ENCODE measurements at regions of chr12 and their contacts with region 1.

Region 1: DNA sequence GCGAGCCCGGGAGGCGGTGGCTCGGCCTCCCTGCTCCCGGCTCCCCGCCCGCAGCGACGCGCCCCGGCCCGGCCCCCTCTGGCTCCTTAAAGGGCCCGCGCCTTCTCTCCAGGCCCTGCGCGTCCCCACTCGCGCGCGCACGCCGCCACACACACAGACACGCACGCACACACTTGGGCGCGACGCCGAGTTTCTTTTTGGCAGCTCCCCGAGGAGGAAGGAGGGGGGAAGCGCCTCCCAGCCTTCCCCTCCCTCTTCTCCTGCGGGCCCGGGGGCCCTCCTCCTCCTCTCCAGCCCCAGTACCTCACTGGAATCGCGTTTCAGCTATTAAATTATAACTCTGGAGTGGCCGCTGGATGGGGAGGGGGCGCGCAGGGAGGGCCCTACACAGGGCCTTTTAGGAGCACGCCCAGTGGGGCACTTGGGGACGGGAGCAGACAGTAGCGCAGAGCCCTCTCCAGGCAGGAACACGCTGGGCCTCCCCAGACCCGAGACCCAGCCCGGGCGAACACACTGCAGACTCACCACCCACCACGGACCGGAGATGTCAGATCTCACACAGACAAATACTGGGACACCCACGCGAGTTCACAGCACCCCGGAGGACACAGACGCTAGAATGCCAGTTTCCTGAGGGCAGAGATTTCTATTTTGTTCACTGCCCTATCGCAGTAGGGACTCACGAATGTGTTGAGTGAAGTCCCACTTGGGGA is 405 bp upstream of the NCOR2 start:
- DNase-seq: peak; percentile 98
- H3K4me3 ChIP-seq: peak overlapping the region; percentile 4 to 96 (median 56)
- H3K27ac ChIP-seq: peak overlapping the region; percentile 91 to 100 (median 98)
- H3K4me1 ChIP-seq: peaks cover 0 to 56% (median 53%) of the 10 kb centered on the region in 4 donors
- H3K27me3 ChIP-seq: no peaks in the 10 kb centered on the region
- CTCF ChIP-seq: no peak
- EP300 ChIP-seq: peak in 2 of 4 donors; percentile 56 to 69
- POLR2A ChIP-seq: no peak

Region 2: DNA sequence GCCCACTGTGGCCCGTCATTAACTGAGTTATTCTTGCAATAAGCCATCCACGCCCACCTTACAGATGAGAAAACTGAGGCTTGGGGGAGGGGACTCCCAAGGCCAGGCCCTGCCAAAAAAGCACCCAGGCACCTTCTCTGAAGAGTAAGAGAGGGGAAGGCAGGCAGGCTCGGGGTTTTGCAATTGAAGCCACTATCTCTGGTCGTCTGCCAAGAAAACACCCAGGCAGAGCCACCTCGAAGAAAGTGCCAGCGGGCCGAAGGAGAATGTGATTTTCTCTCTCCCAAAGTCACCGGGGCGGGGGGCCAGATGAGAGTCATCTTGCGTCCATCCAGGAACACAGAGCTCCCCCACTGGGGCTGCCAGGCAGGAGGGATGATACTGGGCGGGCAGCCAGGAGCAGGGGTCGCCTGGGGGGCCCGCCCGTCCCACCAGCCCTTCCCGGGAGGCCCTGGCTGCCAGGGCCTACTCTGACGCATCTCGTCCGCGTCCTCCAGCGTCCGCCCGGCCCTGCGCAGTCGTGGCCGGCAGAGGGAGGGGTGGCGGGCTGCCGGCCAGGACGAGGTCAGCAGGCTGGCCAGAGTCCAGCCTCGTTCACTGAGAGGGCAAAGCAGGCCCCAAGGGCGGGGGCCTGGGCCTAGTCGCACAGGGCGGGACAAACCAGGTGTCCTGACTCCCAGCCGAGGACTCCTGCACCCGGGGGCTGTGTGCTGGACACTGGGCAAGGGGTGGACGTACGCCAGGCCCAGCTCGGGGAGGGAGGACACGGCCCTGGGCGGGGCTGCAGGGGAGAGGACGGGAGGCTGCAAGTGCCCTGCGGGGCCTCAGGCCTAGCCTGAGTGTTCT is 198.5 kb before region 1 on chr12:
- intact Hi-C with region 1: loop called (anchors 5 kb)
- DNase-seq: peak; percentile 97
- H3K4me3 ChIP-seq: peak overlapping the region in 2 of 4 donors; percentile 2 to 12
- H3K27ac ChIP-seq: peak overlapping the region; percentile 88 to 97 (median 92)
- H3K4me1 ChIP-seq: peaks cover 0 to 65% (median 63%) of the 10 kb centered on the region in 4 donors
- H3K27me3 ChIP-seq: no peaks in the 10 kb centered on the region
- CTCF ChIP-seq: peak; percentile 53 to 56 (median 53)
- EP300 ChIP-seq: peak in 3 of 4 donors; percentile 47 to 78 (median 52)
- POLR2A ChIP-seq: peak in 1 of 2 donors; percentile 12

Region 3: GRCh38 chr12:124379938-124380754 is 187.7 kb before region 1 on chr12:
- intact Hi-C with region 1: loop called (anchors 5 kb)
- DNase-seq: peak; percentile 94
- H3K4me3 ChIP-seq: no peak overlapping the region
- H3K27ac ChIP-seq: peak overlapping the region; percentile 94 to 99 (median 96)
- H3K4me1 ChIP-seq: peaks cover 0 to 64% (median 53%) of the 10 kb centered on the region in 4 donors
- H3K27me3 ChIP-seq: no peaks in the 10 kb centered on the region
- CTCF ChIP-seq: peak; percentile 65 to 71 (median 68)
- EP300 ChIP-seq: peak in 2 of 4 donors; percentile 1 to 21
- POLR2A ChIP-seq: no peak

Region 4: DNA sequence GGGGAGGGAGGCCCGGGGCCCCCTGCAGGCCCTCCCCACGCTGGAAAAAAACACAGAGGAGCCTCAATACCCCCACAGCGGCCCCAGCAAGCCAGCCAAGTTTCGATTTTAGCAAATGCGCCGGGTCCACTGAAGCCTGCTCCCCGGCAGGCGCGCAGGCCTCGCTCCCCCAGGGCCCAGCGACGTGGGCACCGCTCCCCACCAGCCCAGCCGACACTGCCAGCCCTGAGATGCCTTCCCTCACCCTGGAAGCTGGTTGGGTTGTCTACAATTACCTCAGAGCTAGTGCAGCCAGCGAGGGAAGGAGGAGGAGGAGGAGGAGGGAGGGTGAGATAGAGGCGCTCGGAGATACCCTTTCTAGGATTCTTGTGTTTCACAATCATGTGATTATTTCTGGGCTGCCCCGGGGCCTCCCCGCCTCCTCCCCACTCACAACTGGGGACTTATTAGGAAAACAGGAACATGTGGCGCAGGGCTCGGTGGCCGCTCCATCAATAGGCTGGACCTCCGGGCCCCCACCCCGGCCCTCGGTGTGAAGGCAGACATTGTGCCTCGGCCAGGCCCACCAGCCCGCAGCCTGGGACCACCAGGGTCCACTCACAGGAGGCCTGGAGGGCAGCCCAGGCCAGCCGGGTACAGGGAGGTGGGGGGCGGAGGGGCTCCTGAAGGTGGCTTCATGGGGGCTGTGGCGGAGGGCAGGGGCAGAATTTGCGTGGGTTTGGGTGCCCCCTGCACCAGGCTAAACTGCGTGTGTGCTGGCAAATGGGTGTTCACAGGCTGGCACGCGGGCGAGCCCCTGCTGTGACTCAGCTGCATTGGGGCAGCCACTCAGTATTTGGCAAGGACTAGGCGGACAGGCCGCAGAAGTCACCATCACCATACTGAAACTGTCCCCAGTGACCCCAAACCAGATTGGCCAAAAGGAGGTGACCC is 110.3 kb before region 1 on chr12:
- intact Hi-C with region 1: loop called (anchors 5 kb)
- DNase-seq: peak; percentile 95
- H3K4me3 ChIP-seq: peak overlapping the region; percentile 23 to 53 (median 42)
- H3K27ac ChIP-seq: peak overlapping the region; percentile 92 to 97 (median 94)
- H3K4me1 ChIP-seq: peaks cover 0 to 71% (median 67%) of the 10 kb centered on the region in 4 donors
- H3K27me3 ChIP-seq: no peaks in the 10 kb centered on the region
- CTCF ChIP-seq: peak in 1 of 4 experiments; percentile 14
- EP300 ChIP-seq: peak in 2 of 4 donors; percentile 28 to 77
- POLR2A ChIP-seq: peak; percentile 53 to 71

Region 5: GRCh38 chr12:124655698-124656516 is 88.1 kb after region 1 on chr12:
- intact Hi-C with region 1: no loop called
- DNase-seq: peak; percentile 91
- H3K4me3 ChIP-seq: peak overlapping the region in 3 of 4 donors; percentile 19 to 31 (median 25)
- H3K27ac ChIP-seq: peak overlapping the region; percentile 85 to 94 (median 88)
- H3K4me1 ChIP-seq: peaks cover 0 to 42% (median 27%) of the 10 kb centered on the region in 4 donors
- H3K27me3 ChIP-seq: no peaks in the 10 kb centered on the region
- CTCF ChIP-seq: no peak
- EP300 ChIP-seq: no peak
- POLR2A ChIP-seq: no peak

Measured in sigmoid colon (tissue), 7 donors.